Mammary epithelial cell (primary cell): ENCODE measurements at regions of chr3 and their contacts with region 1.

Region 1: GRCh38 chr3:139448104-139448503 is 28.2 kb downstream of the RBP2 start:
- DNase-seq: peak; percentile 12
- H3K4me3 ChIP-seq: no peak overlapping the region
- H3K27ac ChIP-seq: no peak overlapping the region
- H3K4me1 ChIP-seq: no peaks in the 10 kb centered on the region
- H3K27me3 ChIP-seq: no peaks in the 10 kb centered on the region
- CTCF ChIP-seq: no peak

Region 2: GRCh38 chr3:139074565-139075115 is 373.5 kb before region 1 on chr3:
- CTCF ChIA-PET with region 1: no interaction called
- dilution Hi-C with region 1: no loop called
- in situ Hi-C with region 1: no loop called
- intact Hi-C with region 1: no loop called
- DNase-seq: no peak
- H3K4me3 ChIP-seq: no peak overlapping the region
- H3K27ac ChIP-seq: no peak overlapping the region
- H3K4me1 ChIP-seq: no peaks in the 10 kb centered on the region
- H3K27me3 ChIP-seq: no peaks in the 10 kb centered on the region
- CTCF ChIP-seq: no peak

Region 3: GRCh38 chr3:139302084-139302800 is 145.9 kb before region 1 on chr3:
- CTCF ChIA-PET with region 1: no interaction called
- dilution Hi-C with region 1: no loop called
- in situ Hi-C with region 1: no loop called
- intact Hi-C with region 1: no loop called
- DNase-seq: peak; percentile 96
- H3K4me3 ChIP-seq: no peak overlapping the region
- H3K27ac ChIP-seq: peak overlapping the region; percentile 64
- H3K4me1 ChIP-seq: peaks cover 48% of the 10 kb centered on the region
- H3K27me3 ChIP-seq: no peaks in the 10 kb centered on the region
- CTCF ChIP-seq: no peak

Region 4: DNA sequence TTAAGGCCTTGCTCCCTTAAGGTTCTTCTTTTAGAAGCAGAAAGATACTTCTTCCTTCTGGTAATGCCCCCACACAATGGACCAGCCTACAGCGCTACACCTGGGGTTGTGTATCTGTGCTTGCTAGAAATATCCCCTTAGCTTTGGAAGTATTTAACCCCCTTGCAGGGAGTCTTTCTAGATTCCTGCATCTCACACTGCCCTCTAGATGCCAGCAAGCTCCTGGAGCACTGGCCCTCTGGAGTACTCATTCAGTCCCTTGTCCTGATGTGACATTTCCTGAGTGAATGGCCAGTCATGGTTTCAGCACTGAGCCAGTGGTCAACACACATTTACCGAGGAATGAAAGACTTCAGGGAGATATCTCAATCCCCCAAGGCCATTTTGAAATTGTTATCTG is 58.7 kb after region 1 on chr3:
- CTCF ChIA-PET with region 1: no interaction called
- dilution Hi-C with region 1: no loop called
- in situ Hi-C with region 1: loop called in 1 of 2 experiments (anchors 10 kb)
- intact Hi-C with region 1: no loop called
- DNase-seq: no peak
- H3K4me3 ChIP-seq: no peak overlapping the region
- H3K27ac ChIP-seq: no peak overlapping the region
- H3K4me1 ChIP-seq: no peaks in the 10 kb centered on the region
- H3K27me3 ChIP-seq: peaks cover 4% of the 10 kb centered on the region
- CTCF ChIP-seq: peak in 1 of 2 donors; percentile 44

Region 5: GRCh38 chr3:139519998-139520737 is 72.1 kb after region 1 on chr3:
- CTCF ChIA-PET with region 1: no interaction called
- dilution Hi-C with region 1: no loop called
- in situ Hi-C with region 1: no loop called
- intact Hi-C with region 1: no loop called
- DNase-seq: peak; percentile 41
- H3K4me3 ChIP-seq: no peak overlapping the region
- H3K27ac ChIP-seq: no peak overlapping the region
- H3K4me1 ChIP-seq: no peaks in the 10 kb centered on the region
- H3K27me3 ChIP-seq: no peaks in the 10 kb centered on the region
- CTCF ChIP-seq: peak; percentile 42 to 54